ENCODE measurements at regions of chr1 and their contacts with region 1.

Region 1: GRCh38 chr1:98468111-98468717 is 193.3 kb upstream of the SNX7 start:
- DNase-seq: peak; percentile 81
- ATAC-seq: peak; percentile 65; the same call in 1 of the 2 replicates
- H3K4me3 ChIP-seq: no peak overlapping the region
- H3K27ac ChIP-seq: no peak overlapping the region
- H3K4me1 ChIP-seq: peaks cover 2% of the 10 kb centered on the region; the same call in 1 of the 2 replicates
- H3K27me3 ChIP-seq: no peaks in the 10 kb centered on the region
- CTCF ChIP-seq: peak; percentile 96
- POLR2A ChIP-seq: no peak
- RAD21 ChIP-seq: peak; percentile 95

Region 2: GRCh38 chr1:97204468-97204867 is 1263.7 kb before region 1 on chr1:
- CTCF ChIA-PET with region 1: no interaction called
- POLR2A ChIA-PET with region 1: no interaction called
- dilution Hi-C with region 1: no loop called
- in situ Hi-C with region 1: no loop called
- intact Hi-C with region 1: loop called (anchors 10 kb)
- DNase-seq: peak; percentile 75
- ATAC-seq: peak; percentile 98
- H3K4me3 ChIP-seq: no peak overlapping the region
- H3K27ac ChIP-seq: no peak overlapping the region
- H3K4me1 ChIP-seq: peaks cover 5% of the 10 kb centered on the region; the same call in 1 of the 2 replicates
- H3K27me3 ChIP-seq: no peaks in the 10 kb centered on the region
- CTCF ChIP-seq: no peak
- POLR2A ChIP-seq: no peak
- RAD21 ChIP-seq: no peak

Region 3: DNA sequence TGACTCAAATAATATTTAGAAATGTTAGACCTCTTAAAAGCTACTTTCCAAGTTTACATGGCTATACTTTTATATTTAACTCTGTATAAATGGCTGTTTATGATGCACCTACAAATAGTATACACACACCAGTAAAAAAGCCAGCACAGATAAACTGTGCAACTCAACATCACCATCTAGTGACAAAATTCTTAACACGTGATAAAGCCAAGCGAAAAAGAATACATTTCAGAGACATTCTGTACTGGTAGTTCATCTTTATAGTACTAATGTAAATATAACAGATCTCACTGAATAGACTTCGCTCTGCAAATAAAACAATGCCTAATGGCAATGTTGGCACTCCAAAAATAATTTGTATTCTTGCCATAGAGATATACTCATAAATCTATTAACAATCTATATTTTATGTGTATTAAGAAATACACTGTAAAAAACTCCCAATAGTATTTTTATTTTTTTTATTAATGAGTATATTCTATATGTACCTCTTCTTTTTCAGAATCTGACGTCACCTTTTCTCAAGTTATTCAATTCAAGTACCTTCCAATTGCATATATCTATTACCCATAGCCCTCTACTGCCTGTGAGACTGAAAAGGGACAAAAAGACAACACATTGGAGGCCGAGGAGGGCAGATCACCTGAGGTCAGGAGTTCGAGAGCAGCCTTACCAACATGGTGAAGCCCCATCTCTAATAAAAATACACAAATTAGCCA is 647.6 kb before region 1 on chr1:
- CTCF ChIA-PET with region 1: no interaction called
- POLR2A ChIA-PET with region 1: no interaction called
- dilution Hi-C with region 1: no loop called
- in situ Hi-C with region 1: no loop called
- intact Hi-C with region 1: loop called (anchors 2 kb)
- DNase-seq: peak; percentile 58
- ATAC-seq: peak; percentile 82
- H3K4me3 ChIP-seq: no peak overlapping the region
- H3K27ac ChIP-seq: no peak overlapping the region
- H3K4me1 ChIP-seq: no peaks in the 10 kb centered on the region
- H3K27me3 ChIP-seq: no peaks in the 10 kb centered on the region
- CTCF ChIP-seq: peak; percentile 66
- POLR2A ChIP-seq: no peak
- RAD21 ChIP-seq: peak; percentile 78

Region 4: DNA sequence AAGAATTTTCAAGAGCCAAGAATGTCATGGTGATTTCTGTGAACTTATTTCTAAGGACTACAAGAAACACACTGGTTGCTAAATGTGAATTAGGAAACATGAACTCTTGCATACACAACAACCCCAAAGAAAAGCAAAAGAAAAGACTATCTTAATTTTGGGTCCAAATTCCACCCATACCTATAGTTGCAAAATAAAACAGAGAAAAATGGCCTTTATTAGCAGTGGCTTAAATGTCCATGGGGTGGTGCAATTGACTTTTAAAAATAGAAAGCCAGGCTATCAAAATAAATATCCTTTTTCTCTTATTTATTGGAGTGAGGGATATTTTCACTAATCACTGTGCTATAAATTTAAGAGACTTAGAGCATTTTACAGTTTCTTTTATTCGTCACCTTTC is 466.4 kb before region 1 on chr1:
- CTCF ChIA-PET with region 1: interaction called, 4 read pairs
- POLR2A ChIA-PET with region 1: no interaction called
- dilution Hi-C with region 1: no loop called
- in situ Hi-C with region 1: no loop called
- intact Hi-C with region 1: loop called (anchors 2 kb)
- DNase-seq: peak; percentile 18
- ATAC-seq: peak; percentile 19; the same call in 1 of the 2 replicates
- H3K4me3 ChIP-seq: no peak overlapping the region
- H3K27ac ChIP-seq: no peak overlapping the region
- H3K4me1 ChIP-seq: peaks cover 2% of the 10 kb centered on the region; the same call in 1 of the 2 replicates
- H3K27me3 ChIP-seq: no peaks in the 10 kb centered on the region
- CTCF ChIP-seq: peak; percentile 52
- POLR2A ChIP-seq: no peak
- RAD21 ChIP-seq: peak; percentile 60

Region 5: DNA sequence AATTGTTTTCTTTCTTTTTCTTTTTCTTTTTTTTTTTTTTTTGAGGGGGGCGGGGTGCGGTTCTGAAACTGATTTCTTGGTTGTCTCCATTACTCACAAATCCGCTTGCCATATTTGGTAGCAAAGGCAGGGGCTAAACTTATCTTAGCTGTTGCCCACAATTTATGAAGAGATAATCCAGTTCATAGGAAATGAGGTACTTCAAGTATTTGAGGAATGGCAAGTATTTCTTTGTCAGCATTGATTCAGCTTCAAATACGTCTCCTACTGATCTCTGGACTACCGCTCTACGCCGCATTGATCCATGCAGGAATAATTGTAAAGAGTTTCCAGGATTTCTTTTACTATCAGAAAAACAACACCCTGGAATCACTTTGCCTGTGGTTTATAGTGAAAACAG is 258.1 kb before region 1 on chr1:
- CTCF ChIA-PET with region 1: interaction called, 3 read pairs
- POLR2A ChIA-PET with region 1: no interaction called
- dilution Hi-C with region 1: no loop called
- in situ Hi-C with region 1: no loop called
- intact Hi-C with region 1: loop called (anchors 5 kb)
- DNase-seq: peak; percentile 96
- ATAC-seq: peak; percentile 95
- H3K4me3 ChIP-seq: peak overlapping the region; percentile 11; the same call in 1 of the 2 replicates
- H3K27ac ChIP-seq: peak overlapping the region; percentile 61
- H3K4me1 ChIP-seq: peaks cover 3% of the 10 kb centered on the region; the same call in 1 of the 2 replicates
- H3K27me3 ChIP-seq: no peaks in the 10 kb centered on the region
- CTCF ChIP-seq: no peak
- POLR2A ChIP-seq: peak; percentile 23; the same call in 1 of the 2 replicates
- RAD21 ChIP-seq: 0 out of 2 replicates have a peak, but pooled peaks have one; percentile 1

Region 6: DNA sequence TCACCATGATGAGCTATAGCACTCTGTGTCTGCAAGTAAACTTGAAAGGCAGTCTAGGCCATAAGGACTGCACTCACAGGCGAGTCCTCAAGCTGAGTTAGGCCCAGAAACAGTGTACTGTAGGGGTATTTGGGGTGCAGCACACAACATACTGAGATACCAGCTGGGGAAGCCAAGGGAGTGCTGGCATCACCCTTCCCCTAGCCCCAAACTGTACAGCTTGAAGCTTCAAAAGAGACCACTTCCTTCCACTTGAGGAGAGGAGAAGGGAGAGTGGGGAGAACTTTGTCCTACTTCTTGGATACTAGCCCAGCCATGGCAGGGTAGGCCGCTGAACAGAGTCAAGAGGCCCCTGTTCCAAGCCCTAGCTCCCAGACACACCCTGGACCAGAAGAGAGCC is 169.1 kb after region 1 on chr1:
- CTCF ChIA-PET with region 1: no interaction called
- POLR2A ChIA-PET with region 1: no interaction called
- dilution Hi-C with region 1: no loop called
- in situ Hi-C with region 1: no loop called
- intact Hi-C with region 1: no loop called
- DNase-seq: no peak
- ATAC-seq: no peak
- H3K4me3 ChIP-seq: no peak overlapping the region
- H3K27ac ChIP-seq: no peak overlapping the region
- H3K4me1 ChIP-seq: no peaks in the 10 kb centered on the region
- H3K27me3 ChIP-seq: no peaks in the 10 kb centered on the region
- CTCF ChIP-seq: no peak
- POLR2A ChIP-seq: no peak
- RAD21 ChIP-seq: no peak